Vagina (tissue), 2 donors: ENCODE measurements at regions of chr21 and their contacts with region 1.

Region 1: DNA sequence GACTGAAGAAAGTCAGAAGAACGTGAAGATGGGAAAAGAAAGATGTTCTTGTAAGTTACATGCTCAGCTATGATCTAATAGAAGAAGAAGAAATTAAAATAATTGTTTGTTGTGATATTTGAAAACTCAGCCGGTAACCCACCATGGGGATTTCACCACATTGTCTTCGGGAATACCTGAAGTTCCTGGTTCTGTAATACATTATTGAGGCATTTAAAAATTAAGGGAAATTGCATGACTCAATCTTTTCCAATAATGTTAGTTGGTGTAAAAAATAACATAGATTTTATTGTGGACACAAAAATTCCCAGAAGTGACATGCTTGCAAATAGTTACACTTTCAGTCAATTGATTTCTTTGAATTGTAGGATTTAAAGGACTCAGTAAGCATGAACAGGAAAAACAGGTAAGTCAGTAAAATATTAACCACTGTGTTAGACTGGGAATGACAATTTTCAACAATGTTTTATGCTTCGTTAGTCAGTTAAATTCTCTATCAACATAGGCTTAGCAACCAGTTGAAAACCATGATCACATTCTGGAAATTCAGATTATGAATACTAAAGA is 745.1 kb downstream of the LTN1 start:
- DNase-seq: no peak
- H3K4me3 ChIP-seq: no peak overlapping the region
- H3K27ac ChIP-seq: no peak overlapping the region
- H3K4me1 ChIP-seq: peaks cover 8% of the 10 kb centered on the region
- H3K27me3 ChIP-seq: no peaks in the 10 kb centered on the region
- CTCF ChIP-seq: no peak
- POLR2A ChIP-seq: no peak

Region 2: GRCh38 chr21:28714777-28715464 is 467.4 kb after region 1 on chr21:
- intact Hi-C with region 1: loop called (anchors 5 kb)
- DNase-seq: no peak
- H3K4me3 ChIP-seq: no peak overlapping the region
- H3K27ac ChIP-seq: no peak overlapping the region
- H3K4me1 ChIP-seq: no peaks in the 10 kb centered on the region
- H3K27me3 ChIP-seq: no peaks in the 10 kb centered on the region
- CTCF ChIP-seq: no peak
- POLR2A ChIP-seq: no peak